ENCODE measurements at regions of chr17 and their contacts with region 1.

Region 1: GRCh38 chr17:21275579-21276263 is 8.8 kb upstream of the MAP2K3 start:
- DNase-seq: peak in 1 of 2 experiments; percentile 98
- H3K4me3 ChIP-seq: peak overlapping the region; percentile 33 to 68 (median 44)
- H3K27ac ChIP-seq: no peak overlapping the region
- H3K4me1 ChIP-seq: peaks cover 0 to 4% (median 0%) of the 10 kb centered on the region in 4 experiments; a peak in 3 of 7 replicates
- H3K27me3 ChIP-seq: peaks cover 3 to 27% (median 15%) of the 10 kb centered on the region in 4 experiments
- CTCF ChIP-seq: peak in 1 of 3 experiments; percentile 3; a peak in 1 of 4 replicates
- EP300 ChIP-seq: no peak
- POLR2A ChIP-seq: no peak
- RAD21 ChIP-seq: peak in 1 of 2 experiments; percentile 22; a peak in 2 of 4 replicates

Region 2: GRCh38 chr17:21119247-21119918 is 156.3 kb before region 1 on chr17:
- CTCF ChIA-PET with region 1: interaction called, 11 read pairs
- POLR2A ChIA-PET with region 1: no interaction called
- DNase-seq: peak in 1 of 2 experiments; percentile 76
- H3K4me3 ChIP-seq: no peak overlapping the region
- H3K27ac ChIP-seq: no peak overlapping the region
- H3K4me1 ChIP-seq: peaks cover 0 to 3% (median 0%) of the 10 kb centered on the region in 4 experiments; a peak in 1 of 7 replicates
- H3K27me3 ChIP-seq: no peaks in the 10 kb centered on the region
- CTCF ChIP-seq: peak; percentile 85 to 92 (median 86)
- EP300 ChIP-seq: no peak
- POLR2A ChIP-seq: no peak
- RAD21 ChIP-seq: peak; percentile 78 to 82

Region 3: DNA sequence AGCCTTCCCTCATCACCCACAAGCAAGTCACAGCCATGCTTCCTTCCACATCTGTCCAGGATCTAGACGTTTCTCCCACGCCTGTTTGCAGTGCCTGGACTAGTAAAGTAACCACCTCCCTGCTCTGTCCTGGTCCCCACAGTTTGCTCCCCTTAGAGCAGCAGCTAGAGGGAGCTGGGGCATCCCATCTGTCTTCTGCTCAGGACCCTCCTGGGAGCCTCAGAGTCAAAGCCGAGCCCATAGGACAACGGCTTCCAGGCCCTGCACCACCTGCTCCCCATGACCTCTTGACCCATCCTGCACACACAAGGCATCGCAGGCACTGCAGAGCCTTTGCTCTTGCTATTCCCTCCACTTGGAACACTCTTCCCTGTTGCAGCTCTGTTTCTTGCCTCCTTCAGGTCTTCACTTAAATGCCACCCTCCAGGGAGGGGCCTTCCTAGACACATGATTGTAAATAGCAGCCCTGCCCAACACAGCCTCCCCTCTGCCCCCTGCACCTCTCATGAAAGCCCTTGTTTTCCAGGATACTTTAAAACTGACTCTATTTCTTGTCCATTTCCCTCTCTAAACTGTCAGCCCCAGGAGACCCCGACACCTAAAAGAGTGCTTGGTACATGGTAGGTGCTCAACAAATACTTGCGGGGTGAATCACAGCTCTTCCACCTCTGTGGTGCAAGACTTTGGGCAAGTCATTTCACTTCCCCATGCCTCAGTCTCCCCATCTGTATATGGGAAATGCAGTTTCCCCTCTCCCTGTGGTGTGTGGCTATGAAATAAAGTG is 25.6 kb before region 1 on chr17:
- CTCF ChIA-PET with region 1: interaction called, 11 read pairs
- POLR2A ChIA-PET with region 1: interaction called, 6 read pairs
- DNase-seq: no peak
- H3K4me3 ChIP-seq: no peak overlapping the region
- H3K27ac ChIP-seq: no peak overlapping the region
- H3K4me1 ChIP-seq: peaks cover 0 to 12% (median 4%) of the 10 kb centered on the region in 4 experiments; a peak in 5 of 7 replicates
- H3K27me3 ChIP-seq: peaks cover 0 to 6% (median 4%) of the 10 kb centered on the region in 4 experiments; a peak in 2 of 7 replicates
- CTCF ChIP-seq: peak in 1 of 3 experiments; percentile 29; a peak in 1 of 4 replicates
- EP300 ChIP-seq: no peak
- POLR2A ChIP-seq: no peak
- RAD21 ChIP-seq: peak in 1 of 2 experiments; percentile 23; a peak in 2 of 4 replicates

Region 4: GRCh38 chr17:21287596-21288449 is 12.1 kb after region 1 on chr17:
- CTCF ChIA-PET with region 1: interaction called, 11 read pairs
- POLR2A ChIA-PET with region 1: interaction called, 6 read pairs
- DNase-seq: no peak
- H3K4me3 ChIP-seq: no peak overlapping the region
- H3K27ac ChIP-seq: no peak overlapping the region
- H3K4me1 ChIP-seq: peaks cover 0 to 19% (median 9%) of the 10 kb centered on the region in 4 experiments; a peak in 6 of 7 replicates
- H3K27me3 ChIP-seq: peaks cover 5 to 13% (median 12%) of the 10 kb centered on the region in 4 experiments
- CTCF ChIP-seq: no peak
- EP300 ChIP-seq: no peak
- POLR2A ChIP-seq: no peak
- RAD21 ChIP-seq: no peak

Region 5: DNA sequence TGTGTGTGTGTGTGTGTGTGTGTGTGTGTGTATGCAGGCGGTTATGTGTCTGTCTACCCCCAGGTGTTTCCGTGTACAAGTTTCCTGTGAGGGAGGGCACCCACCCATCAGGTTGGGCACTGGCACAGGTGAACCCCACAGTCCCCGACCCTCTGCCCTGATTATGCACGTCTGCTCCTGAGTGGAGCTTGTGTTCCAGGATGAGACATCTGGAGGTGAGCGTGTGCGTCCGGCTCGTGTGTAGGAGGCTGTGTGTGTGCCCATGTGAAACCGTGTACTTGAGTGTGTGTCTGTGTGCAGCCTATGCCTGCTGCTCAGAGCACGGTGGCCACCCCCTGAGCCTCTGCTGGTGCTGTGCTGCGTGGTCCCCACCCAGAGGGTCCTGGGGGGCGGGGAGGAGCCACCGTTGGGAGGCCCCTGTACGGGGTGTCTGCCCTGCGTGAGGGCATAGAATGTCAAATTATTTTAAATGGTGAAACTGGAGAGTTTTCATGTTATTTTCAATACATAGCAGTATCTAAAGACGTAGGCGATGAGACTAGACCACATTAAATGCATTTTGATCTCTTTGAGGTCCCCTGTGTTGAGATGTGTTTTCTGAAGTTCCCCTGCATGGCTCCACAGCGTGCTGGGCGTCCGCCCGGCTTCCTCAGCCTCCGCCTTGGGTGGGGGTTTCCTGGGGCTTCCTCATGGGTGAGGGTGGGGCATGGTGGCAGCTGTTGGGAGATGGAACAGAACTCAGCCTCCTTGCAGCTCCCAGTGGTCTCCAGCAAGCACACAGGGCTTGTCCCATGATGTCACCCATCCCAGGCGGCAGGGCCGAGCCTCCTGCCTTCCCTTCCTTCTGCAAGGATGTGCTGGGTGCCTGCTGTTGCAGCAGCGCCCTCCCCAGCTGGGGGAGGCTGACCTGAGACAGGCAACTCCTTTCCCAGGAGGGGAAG is 143.8 kb after region 1 on chr17:
- CTCF ChIA-PET with region 1: no interaction called
- POLR2A ChIA-PET with region 1: no interaction called
- DNase-seq: no peak
- H3K4me3 ChIP-seq: no peak overlapping the region
- H3K27ac ChIP-seq: no peak overlapping the region
- H3K4me1 ChIP-seq: no peaks in the 10 kb centered on the region; a peak in 1 of 7 replicates
- H3K27me3 ChIP-seq: no peaks in the 10 kb centered on the region
- CTCF ChIP-seq: no peak
- EP300 ChIP-seq: no peak
- POLR2A ChIP-seq: no peak
- RAD21 ChIP-seq: no peak

Region 6: GRCh38 chr17:21445091-21445650 is 169.4 kb after region 1 on chr17:
- CTCF ChIA-PET with region 1: no interaction called
- POLR2A ChIA-PET with region 1: no interaction called
- DNase-seq: no peak
- H3K4me3 ChIP-seq: no peak overlapping the region
- H3K27ac ChIP-seq: no peak overlapping the region
- H3K4me1 ChIP-seq: no peaks in the 10 kb centered on the region
- H3K27me3 ChIP-seq: no peaks in the 10 kb centered on the region
- CTCF ChIP-seq: no peak
- EP300 ChIP-seq: no peak
- POLR2A ChIP-seq: no peak
- RAD21 ChIP-seq: no peak

Measured in H1 (cell line).